ENCODE measurements at regions of chr1 and their contacts with region 1.

Region 1: GRCh38 chr1:203038891-203039608 is 12.8 kb downstream of the PPFIA4 start:
- DNase-seq: peak; percentile 77
- ATAC-seq: peak; percentile 89
- H3K4me3 Mint-ChIP-seq: no peak overlapping the region
- H3K27ac Mint-ChIP-seq: no peak overlapping the region
- H3K4me1 Mint-ChIP-seq: peaks cover 6% of the 10 kb centered on the region
- H3K27me3 Mint-ChIP-seq: peaks cover 4% of the 10 kb centered on the region
- CTCF ChIP-seq: peak; percentile 77

Region 2: DNA sequence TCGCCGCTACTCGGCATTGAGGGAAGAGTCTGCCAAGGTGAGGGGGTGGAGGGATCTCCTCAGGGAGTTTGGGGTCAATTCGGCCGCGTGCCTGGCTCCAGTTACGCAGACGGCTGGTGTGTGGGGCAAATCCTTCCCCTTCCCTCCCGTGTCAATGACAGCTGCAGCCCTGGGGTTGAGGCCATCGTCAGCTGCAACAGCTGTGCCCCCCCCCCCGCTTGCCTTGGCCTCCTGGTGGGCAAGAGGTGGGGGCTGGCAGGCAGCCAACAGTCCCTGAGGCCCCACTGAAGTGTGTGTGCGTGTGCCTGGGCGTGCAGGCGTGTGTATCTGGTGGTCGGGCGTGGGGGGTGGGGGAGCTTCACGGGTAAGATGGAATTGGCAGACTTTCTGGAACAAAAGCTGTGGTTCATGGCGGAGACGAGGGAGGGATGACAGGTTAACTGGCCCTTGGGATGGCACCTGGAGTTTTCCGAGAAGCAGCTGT is 12.8 kb after region 1 on chr1:
- CTCF ChIA-PET with region 1: interaction called, 30 read pairs
- POLR2A ChIA-PET with region 1: interaction called, 4 read pairs
- intact Hi-C with region 1: no loop called
- DNase-seq: no peak
- ATAC-seq: no peak
- H3K4me3 Mint-ChIP-seq: no peak overlapping the region
- H3K27ac Mint-ChIP-seq: no peak overlapping the region
- H3K4me1 Mint-ChIP-seq: peaks cover 2% of the 10 kb centered on the region
- H3K27me3 Mint-ChIP-seq: peaks cover 4% of the 10 kb centered on the region
- CTCF ChIP-seq: no peak

Region 3: DNA sequence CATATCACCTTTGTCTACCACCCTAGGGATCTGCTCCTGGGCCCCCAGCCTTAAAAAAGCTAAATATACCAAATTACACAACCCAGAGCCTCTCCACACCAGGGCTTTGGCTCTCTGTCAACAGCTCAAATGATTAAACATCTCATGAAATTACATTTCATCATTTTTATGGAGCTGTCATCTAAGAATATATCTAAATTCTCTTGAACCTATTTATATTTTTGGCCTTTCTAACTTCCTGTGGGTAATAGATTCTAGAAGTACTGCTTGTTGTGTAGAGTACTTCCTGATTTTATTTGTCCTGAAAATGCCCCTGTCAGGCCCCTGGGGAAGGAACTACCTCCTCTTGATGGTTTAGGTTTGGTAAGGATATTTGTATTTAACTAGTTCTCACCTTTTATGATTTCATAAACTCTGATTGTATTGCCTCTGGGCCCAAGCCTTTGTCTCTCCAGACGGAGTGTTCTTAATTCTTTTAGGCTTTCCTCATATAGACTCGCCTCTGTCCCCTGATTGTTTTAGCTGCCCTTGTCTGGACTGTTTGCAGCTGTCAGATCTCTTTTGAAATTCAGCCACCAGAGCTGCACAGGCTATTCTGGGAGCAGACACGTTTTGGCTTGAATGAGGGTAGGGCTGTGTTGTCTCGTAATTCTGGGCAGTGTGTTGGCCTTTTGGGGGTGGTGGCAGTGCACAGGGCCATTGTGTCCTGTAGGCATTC is 30.1 kb after region 1 on chr1:
- CTCF ChIA-PET with region 1: interaction called, 12 read pairs
- POLR2A ChIA-PET with region 1: no interaction called
- intact Hi-C with region 1: no loop called
- DNase-seq: no peak
- ATAC-seq: no peak
- H3K4me3 Mint-ChIP-seq: no peak overlapping the region
- H3K27ac Mint-ChIP-seq: no peak overlapping the region
- H3K4me1 Mint-ChIP-seq: no peaks in the 10 kb centered on the region
- H3K27me3 Mint-ChIP-seq: peaks cover 6% of the 10 kb centered on the region
- CTCF ChIP-seq: no peak

Region 4: GRCh38 chr1:203172128-203173010 is 133.3 kb after region 1 on chr1:
- CTCF ChIA-PET with region 1: interaction called, 58 read pairs
- POLR2A ChIA-PET with region 1: no interaction called
- intact Hi-C with region 1: loop called (anchors 5 kb)
- DNase-seq: peak; percentile 56
- ATAC-seq: peak; percentile 74
- H3K4me3 Mint-ChIP-seq: no peak overlapping the region
- H3K27ac Mint-ChIP-seq: no peak overlapping the region
- H3K4me1 Mint-ChIP-seq: no peaks in the 10 kb centered on the region
- H3K27me3 Mint-ChIP-seq: no peaks in the 10 kb centered on the region
- CTCF ChIP-seq: peak; percentile 94

Region 5: GRCh38 chr1:203216274-203217138 is 177.5 kb after region 1 on chr1:
- CTCF ChIA-PET with region 1: interaction called, 92 read pairs
- POLR2A ChIA-PET with region 1: no interaction called
- intact Hi-C with region 1: loop called (anchors 2 kb)
- DNase-seq: peak; percentile 69
- ATAC-seq: peak; percentile 67
- H3K4me3 Mint-ChIP-seq: no peak overlapping the region
- H3K27ac Mint-ChIP-seq: no peak overlapping the region
- H3K4me1 Mint-ChIP-seq: no peaks in the 10 kb centered on the region
- H3K27me3 Mint-ChIP-seq: no peaks in the 10 kb centered on the region
- CTCF ChIP-seq: peak; percentile 83